Motor neuron (in vitro differentiated cells): ENCODE measurements at regions of chr16 and their contacts with region 1.

Region 1: GRCh38 chr16:70770626-70771552 is 30.1 kb downstream of the VAC14 start:
- ATAC-seq: peak; percentile 69 to 86 (median 81)
- H3K4me3 ChIP-seq: no peak overlapping the region
- H3K27ac ChIP-seq: no peak overlapping the region
- H3K4me1 ChIP-seq: peaks cover 2 to 6% of the 10 kb centered on the region in 2 donors

Region 2: GRCh38 chr16:70529051-70529777 is 241.7 kb before region 1 on chr16:
- in situ Hi-C with region 1: loop called in 1 of 9 experiments (anchors 25 kb)
- ATAC-seq: peak in 3 of 8 experiments; percentile 11 to 42 (median 26)
- H3K4me3 ChIP-seq: no peak overlapping the region
- H3K27ac ChIP-seq: no peak overlapping the region
- H3K4me1 ChIP-seq: peaks cover 21 to 23% of the 10 kb centered on the region in 2 donors

Region 3: DNA sequence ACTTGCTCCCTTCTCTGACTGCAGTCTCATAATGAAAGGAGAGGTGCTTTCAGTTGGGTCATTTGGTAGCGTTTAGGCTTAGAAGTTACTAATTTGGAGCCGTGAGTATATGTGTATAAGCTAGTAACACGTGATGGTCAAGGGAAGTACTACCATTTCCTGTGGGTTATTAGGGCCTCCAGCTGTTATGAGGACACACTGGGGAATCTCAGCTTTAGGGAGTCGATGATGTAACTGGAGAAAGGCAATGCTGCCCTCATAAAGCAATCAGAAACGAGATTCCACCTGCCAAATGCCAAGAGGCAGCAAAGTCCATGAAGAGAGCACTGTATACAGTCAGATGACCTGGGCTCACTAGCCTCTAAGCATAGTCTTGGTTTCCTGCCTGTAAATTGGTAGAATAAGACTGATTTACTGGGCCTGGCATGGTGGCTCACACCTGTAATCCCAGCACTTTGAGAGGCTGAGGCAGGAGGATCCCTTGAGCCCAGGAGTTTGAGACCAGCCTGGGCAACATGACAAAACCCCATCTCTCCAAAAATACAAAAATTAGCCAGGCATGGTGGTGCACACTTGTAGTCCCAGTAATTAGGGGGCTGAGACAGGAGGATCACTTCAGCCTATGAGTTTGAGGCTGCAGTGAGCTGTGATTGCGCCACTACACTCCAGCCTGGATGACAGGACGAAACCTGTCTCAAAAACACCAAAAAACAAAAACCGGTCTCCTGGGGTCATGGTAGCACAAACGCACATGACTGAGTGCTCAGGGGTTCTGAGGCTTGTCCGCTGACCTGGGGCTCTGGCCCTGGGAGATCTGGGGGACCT is 194.2 kb before region 1 on chr16:
- in situ Hi-C with region 1: loop called in 1 of 9 experiments (anchors 25 kb)
- ATAC-seq: peak in 5 of 8 experiments; percentile 5 to 26 (median 12)
- H3K4me3 ChIP-seq: no peak overlapping the region
- H3K27ac ChIP-seq: no peak overlapping the region
- H3K4me1 ChIP-seq: no peaks in the 10 kb centered on the region

Region 4: GRCh38 chr16:70679666-70680494 is 91.0 kb before region 1 on chr16:
- in situ Hi-C with region 1: loop called in 1 of 9 experiments (anchors 10 kb)
- ATAC-seq: peak in 4 of 8 experiments; percentile 2 to 32 (median 22)
- H3K4me3 ChIP-seq: no peak overlapping the region
- H3K27ac ChIP-seq: no peak overlapping the region
- H3K4me1 ChIP-seq: peaks cover 10 to 24% of the 10 kb centered on the region in 2 donors